H1 (cell line): ENCODE measurements at regions of chr1 and their contacts with region 1.

Region 1: DNA sequence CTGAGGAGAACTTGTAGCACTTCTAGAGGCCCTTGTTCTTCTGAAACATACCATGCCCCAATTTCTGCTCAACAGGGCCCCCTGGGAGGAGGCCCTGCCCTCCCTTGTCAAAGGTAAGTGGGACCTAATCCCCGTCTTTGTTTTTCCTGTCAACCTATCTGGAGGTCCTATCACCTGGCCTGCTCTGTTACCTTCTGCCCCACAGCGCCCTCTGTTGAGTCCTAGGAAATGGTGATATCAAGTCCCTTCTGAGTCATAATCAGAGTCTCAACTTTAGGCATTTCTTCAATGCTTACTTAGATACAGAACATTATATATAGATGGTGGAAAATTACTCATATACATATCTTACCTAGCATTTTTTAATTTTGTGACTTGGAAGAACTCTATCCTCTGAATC is 28.2 kb upstream of the FCRL4 start:
- DNase-seq: peak; percentile 21 to 68
- H3K4me3 ChIP-seq: no peak overlapping the region
- H3K27ac ChIP-seq: no peak overlapping the region
- H3K4me1 ChIP-seq: no peaks in the 10 kb centered on the region; a peak in 1 of 7 replicates
- H3K27me3 ChIP-seq: no peaks in the 10 kb centered on the region
- CTCF ChIP-seq: peak; percentile 51 to 77 (median 72)
- EP300 ChIP-seq: no peak
- POLR2A ChIP-seq: no peak
- RAD21 ChIP-seq: peak; percentile 69 to 78

Region 2: DNA sequence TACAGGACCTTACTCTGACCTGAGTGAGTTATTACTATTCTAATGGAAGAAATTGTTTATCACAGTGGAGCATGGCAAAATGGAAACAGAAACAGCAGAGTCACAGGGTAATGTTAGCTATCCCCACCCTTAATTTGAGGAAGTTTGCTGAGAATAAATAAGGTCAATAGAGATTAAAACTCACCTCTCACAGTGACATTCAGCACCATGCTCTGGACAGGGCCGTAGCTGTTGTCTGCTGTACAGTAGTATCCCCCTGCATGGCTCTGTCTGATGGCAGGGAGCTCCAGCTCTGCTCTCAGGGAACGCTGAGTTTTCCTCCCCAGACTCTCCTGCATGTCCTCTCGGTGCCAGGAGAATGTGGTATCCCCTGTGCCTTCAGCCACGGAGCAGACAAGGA is 40.1 kb before region 1 on chr1:
- CTCF ChIA-PET with region 1: interaction called, 34 read pairs
- POLR2A ChIA-PET with region 1: no interaction called
- DNase-seq: no peak
- H3K4me3 ChIP-seq: no peak overlapping the region
- H3K27ac ChIP-seq: no peak overlapping the region
- H3K4me1 ChIP-seq: peaks cover 0 to 4% (median 0%) of the 10 kb centered on the region in 4 experiments; a peak in 2 of 7 replicates
- H3K27me3 ChIP-seq: no peaks in the 10 kb centered on the region; a peak in 1 of 7 replicates
- CTCF ChIP-seq: no peak
- EP300 ChIP-seq: no peak
- POLR2A ChIP-seq: no peak
- RAD21 ChIP-seq: no peak

Region 3: DNA sequence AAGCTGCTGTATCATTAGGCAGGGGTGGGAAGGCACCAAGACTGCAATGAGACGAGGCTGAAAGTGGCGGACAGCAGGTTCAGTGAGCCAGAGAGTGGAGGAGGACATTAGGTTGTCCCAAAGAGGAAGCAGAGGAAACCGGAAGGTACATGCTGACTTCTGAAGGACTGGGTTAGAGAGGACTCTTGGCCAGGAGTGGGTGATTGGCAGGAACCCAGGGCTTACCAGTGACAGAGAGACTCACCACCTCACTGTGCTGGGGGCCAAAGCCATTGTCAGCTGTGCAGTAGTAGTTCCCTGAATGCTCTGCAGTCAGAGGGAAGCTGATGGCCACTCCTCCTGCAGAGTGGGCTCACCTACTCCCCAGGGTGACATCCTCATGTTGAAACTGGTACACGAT is 13.7 kb after region 1 on chr1:
- CTCF ChIA-PET with region 1: interaction called, 10 read pairs
- POLR2A ChIA-PET with region 1: interaction called, 3 read pairs
- DNase-seq: no peak
- H3K4me3 ChIP-seq: no peak overlapping the region; a peak in 1 of 8 replicates
- H3K27ac ChIP-seq: no peak overlapping the region
- H3K4me1 ChIP-seq: peaks cover 2 to 13% (median 7%) of the 10 kb centered on the region in 4 experiments; a peak in 5 of 7 replicates
- H3K27me3 ChIP-seq: no peaks in the 10 kb centered on the region; a peak in 1 of 7 replicates
- CTCF ChIP-seq: no peak
- EP300 ChIP-seq: no peak
- POLR2A ChIP-seq: no peak
- RAD21 ChIP-seq: no peak

Region 4: GRCh38 chr1:157678721-157679120 is 52.6 kb after region 1 on chr1:
- CTCF ChIA-PET with region 1: no interaction called
- POLR2A ChIA-PET with region 1: no interaction called
- DNase-seq: no peak
- H3K4me3 ChIP-seq: no peak overlapping the region
- H3K27ac ChIP-seq: no peak overlapping the region
- H3K4me1 ChIP-seq: no peaks in the 10 kb centered on the region
- H3K27me3 ChIP-seq: no peaks in the 10 kb centered on the region
- CTCF ChIP-seq: no peak
- EP300 ChIP-seq: no peak
- POLR2A ChIP-seq: no peak
- RAD21 ChIP-seq: no peak

Region 5: DNA sequence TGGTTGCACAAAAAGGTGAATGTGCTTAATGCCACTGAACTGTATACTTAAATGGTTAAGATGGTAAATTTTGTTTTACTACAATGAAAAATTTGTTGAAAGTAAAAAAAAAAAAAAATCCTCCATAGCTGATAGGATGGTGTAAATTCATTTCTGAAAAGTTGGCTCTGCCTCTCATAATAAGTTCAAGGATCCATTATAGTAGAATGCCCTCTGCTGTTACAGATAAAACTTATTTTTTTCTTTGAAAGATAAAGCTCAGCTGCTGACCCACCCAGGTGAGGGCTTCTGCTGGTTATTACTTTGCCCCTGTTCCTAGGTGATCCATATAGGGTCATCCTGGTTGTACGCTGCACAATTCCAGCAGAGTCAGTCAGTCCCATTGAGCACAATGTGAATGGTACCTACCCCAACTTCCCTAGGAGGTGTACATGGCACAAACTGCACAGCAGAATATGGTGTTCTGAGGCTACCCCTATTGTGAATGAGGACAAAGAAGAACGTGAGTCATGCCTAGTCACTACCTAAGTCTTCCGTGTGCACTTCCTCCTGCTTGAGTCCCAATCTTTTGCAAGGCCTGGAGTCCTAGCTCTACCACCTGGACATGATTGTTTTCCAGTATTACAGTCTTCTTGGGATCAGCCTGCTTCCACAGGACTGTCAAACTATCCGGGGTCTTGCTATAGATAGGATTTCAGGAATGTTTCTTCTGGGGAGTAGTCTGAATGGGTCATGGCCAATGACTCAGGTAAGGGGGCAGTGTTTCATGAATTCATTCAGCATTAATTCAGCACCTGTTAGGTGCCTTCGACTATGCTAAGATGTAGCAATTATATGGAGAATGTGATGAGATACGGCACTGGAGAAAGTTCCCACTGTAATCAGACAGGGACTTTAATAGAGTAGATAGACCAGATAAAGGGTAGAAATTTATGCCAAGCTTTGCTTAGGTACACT is 236.3 kb after region 1 on chr1:
- CTCF ChIA-PET with region 1: no interaction called
- POLR2A ChIA-PET with region 1: no interaction called
- DNase-seq: no peak
- H3K4me3 ChIP-seq: no peak overlapping the region
- H3K27ac ChIP-seq: no peak overlapping the region
- H3K4me1 ChIP-seq: no peaks in the 10 kb centered on the region
- H3K27me3 ChIP-seq: no peaks in the 10 kb centered on the region
- CTCF ChIP-seq: no peak
- EP300 ChIP-seq: no peak
- POLR2A ChIP-seq: no peak
- RAD21 ChIP-seq: no peak

Region 6: DNA sequence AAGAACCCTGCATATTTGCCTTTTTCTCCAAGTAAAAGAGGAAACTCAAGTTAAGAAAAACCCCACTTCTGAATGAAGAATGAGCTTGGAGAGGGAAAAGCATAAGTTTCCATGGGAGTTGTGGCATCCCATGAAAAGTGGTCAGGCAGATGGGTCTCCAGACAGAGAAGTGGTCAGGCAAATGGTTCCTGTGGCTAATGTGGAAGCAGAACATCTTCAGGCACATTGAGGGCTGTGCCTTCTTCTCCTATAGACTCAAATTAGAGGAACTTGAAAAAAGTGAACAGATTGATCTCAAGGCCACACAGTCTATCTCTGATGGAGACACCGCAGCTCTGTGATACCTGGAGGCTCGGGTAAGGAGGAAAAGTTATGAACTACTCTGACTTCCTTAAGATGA is 311.6 kb after region 1 on chr1:
- CTCF ChIA-PET with region 1: no interaction called
- POLR2A ChIA-PET with region 1: no interaction called
- DNase-seq: no peak
- H3K4me3 ChIP-seq: no peak overlapping the region
- H3K27ac ChIP-seq: no peak overlapping the region
- H3K4me1 ChIP-seq: no peaks in the 10 kb centered on the region
- H3K27me3 ChIP-seq: no peaks in the 10 kb centered on the region
- CTCF ChIP-seq: no peak
- EP300 ChIP-seq: no peak
- POLR2A ChIP-seq: no peak
- RAD21 ChIP-seq: no peak